ENCODE measurements at regions of chr1 and their contacts with region 1.

Region 1: DNA sequence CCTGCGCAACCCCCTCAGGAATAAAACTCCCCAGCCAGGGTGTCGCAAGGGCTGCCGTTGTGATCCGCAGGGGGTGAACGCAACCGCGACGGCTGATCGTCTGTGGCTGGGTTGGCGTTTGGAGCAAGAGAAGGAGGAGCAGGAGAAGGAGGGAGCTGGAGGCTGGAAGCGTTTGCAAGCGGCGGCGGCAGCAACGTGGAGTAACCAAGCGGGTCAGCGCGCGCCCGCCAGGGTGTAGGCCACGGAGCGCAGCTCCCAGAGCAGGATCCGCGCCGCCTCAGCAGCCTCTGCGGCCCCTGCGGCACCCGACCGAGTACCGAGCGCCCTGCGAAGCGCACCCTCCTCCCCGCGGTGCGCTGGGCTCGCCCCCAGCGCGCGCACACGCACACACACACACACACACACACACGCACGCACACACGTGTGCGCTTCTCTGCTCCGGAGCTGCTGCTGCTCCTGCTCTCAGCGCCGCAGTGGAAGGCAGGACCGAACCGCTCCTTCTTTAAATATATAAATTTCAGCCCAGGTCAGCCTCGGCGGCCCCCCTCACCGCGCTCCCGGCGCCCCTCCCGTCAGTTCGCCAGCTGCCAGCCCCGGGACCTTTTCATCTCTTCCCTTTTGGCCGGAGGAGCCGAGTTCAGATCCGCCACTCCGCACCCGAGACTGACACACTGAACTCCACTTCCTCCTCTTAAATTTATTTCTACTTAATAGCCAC is 696 bp downstream of the TGFB2 start:
- DNase-seq: peak in 1 of 2 experiments; percentile 83
- ATAC-seq: peak; percentile 72 to 78
- H3K4me3 ChIP-seq: peak overlapping the region; percentile 83
- H3K27ac ChIP-seq: peak overlapping the region; percentile 96 to 97
- H3K4me1 ChIP-seq: peaks cover 40% of the 10 kb centered on the region
- CTCF ChIP-seq: no peak
- EP300 ChIP-seq: no peak
- POLR2A ChIP-seq: peak; percentile 63
- RAD21 ChIP-seq: peak in 1 of 2 experiments; percentile 27; a peak in 3 of 5 replicates

Region 2: DNA sequence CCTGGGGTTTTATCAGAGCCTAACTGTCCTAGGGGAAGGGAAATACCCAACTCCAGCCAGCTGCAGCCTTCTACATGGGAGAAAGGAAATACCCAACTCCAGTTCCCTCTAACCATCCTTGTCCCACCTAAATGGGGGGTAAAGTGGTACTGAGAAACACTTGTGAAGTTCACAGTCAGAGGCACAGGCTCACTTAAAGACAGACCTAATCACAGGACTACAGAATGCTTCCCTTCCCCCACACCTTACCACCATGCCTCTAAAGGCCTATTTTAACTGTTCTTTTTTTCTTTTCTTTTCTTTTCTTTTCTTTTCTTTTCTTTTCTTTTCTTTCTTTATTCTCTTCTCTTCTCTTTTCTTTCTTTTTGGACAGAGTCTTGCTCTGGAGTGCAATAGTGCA is 390.1 kb before region 1 on chr1:
- CTCF ChIA-PET with region 1: no interaction called
- POLR2A ChIA-PET with region 1: no interaction called
- DNase-seq: no peak
- ATAC-seq: no peak
- H3K4me3 ChIP-seq: no peak overlapping the region
- H3K27ac ChIP-seq: no peak overlapping the region
- H3K4me1 ChIP-seq: no peaks in the 10 kb centered on the region
- CTCF ChIP-seq: no peak
- EP300 ChIP-seq: no peak
- POLR2A ChIP-seq: no peak
- RAD21 ChIP-seq: no peak

Region 3: GRCh38 chr1:218365226-218365999 is 19.6 kb after region 1 on chr1:
- CTCF ChIA-PET with region 1: interaction called, 5 read pairs
- POLR2A ChIA-PET with region 1: interaction called, 25 read pairs
- DNase-seq: no peak
- ATAC-seq: no peak
- H3K4me3 ChIP-seq: no peak overlapping the region
- H3K27ac ChIP-seq: peak overlapping the region; percentile 83 to 90
- H3K4me1 ChIP-seq: peaks cover 93% of the 10 kb centered on the region
- CTCF ChIP-seq: no peak
- EP300 ChIP-seq: no peak
- POLR2A ChIP-seq: no peak
- RAD21 ChIP-seq: no peak

Region 4: GRCh38 chr1:218377143-218377660 is 31.4 kb after region 1 on chr1:
- CTCF ChIA-PET with region 1: interaction called, 6 read pairs
- POLR2A ChIA-PET with region 1: interaction called, 37 read pairs
- DNase-seq: peak; percentile 76 to 93
- ATAC-seq: peak; percentile 56 to 66
- H3K4me3 ChIP-seq: peak overlapping the region; percentile 7; the same call in 1 of the 3 replicates
- H3K27ac ChIP-seq: peak overlapping the region; percentile 92 to 94
- H3K4me1 ChIP-seq: peaks cover 95% of the 10 kb centered on the region
- CTCF ChIP-seq: no peak
- EP300 ChIP-seq: peak; percentile 87 to 95; a peak in 4 of 5 replicates
- POLR2A ChIP-seq: no peak
- RAD21 ChIP-seq: peak; percentile 24 to 46; a peak in 4 of 5 replicates

Region 5: DNA sequence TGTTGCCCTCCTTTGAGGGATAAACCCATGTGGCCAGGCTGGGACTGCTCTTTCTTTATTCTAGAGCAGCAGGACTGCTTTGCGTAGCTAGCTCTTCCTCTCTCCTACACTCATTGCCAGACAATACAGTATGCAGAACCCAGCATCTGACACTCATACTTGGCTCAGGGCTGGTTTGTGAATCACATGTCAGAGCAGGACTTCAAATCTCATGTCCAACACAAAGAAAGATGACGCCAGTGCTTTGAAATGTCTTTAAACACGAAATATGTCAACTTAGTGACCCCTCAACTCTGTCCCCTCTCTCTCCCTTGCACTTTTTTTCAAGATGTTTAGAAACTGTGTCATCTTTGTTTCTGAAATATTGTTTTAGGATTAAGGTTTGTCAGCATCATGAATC is 134.3 kb after region 1 on chr1:
- CTCF ChIA-PET with region 1: interaction called, 5 read pairs
- POLR2A ChIA-PET with region 1: interaction called, 38 read pairs
- DNase-seq: peak in 1 of 2 experiments; percentile 94
- ATAC-seq: peak; percentile 89 to 91
- H3K4me3 ChIP-seq: no peak overlapping the region
- H3K27ac ChIP-seq: peak overlapping the region; percentile 86 to 91
- H3K4me1 ChIP-seq: peaks cover 62% of the 10 kb centered on the region
- CTCF ChIP-seq: no peak
- EP300 ChIP-seq: no peak
- POLR2A ChIP-seq: no peak
- RAD21 ChIP-seq: peak in 1 of 2 experiments; percentile 36; a peak in 2 of 5 replicates

Region 6: DNA sequence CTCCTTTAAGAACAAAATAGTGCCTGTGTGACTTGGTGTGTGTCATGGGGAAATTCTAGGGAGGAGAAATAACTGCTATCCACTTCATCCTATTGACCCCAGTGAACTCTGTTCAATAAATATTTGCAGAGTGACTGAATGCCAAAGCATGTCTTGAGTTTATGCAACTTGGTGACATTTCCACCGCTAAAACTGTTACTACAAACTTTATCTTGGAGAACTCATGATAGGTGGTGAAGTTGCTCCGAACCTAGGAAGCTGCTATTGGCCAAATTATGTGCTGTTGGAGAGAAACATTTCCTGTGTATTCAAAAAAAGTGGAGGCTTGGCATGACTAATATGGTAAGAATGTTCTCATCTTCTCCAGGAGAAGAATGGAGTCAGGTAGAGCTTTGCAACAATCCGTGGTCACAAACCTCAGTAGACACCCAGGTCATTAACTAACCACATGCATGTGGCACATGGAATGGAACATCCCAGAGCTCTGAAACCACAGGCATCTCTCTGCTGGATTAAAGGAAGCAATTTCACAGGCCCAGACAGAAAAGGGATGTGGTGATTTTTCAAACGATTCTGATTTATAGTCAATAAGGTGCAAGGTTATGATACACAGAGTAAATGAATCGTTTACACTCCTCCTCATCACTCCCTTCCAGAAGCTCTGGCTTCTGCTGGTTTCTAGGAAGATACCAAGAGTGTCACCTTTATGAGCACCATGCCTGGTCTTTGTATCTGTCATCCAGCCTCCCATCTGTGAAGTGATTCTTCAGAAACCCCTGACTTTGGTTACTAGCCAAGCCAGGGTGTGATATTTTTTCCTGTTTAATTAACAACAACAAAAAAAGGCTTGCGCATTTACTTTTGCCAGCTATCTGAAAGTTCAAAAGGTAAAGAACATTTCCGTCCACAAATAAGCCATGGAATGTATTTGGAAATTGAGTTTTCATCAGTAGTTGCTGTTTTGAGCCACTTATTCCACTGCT is 360.4 kb after region 1 on chr1:
- CTCF ChIA-PET with region 1: no interaction called
- POLR2A ChIA-PET with region 1: interaction called, 12 read pairs
- DNase-seq: peak; percentile 85 to 98
- ATAC-seq: peak; percentile 95 to 96
- H3K4me3 ChIP-seq: no peak overlapping the region
- H3K27ac ChIP-seq: peak overlapping the region; percentile 93 to 94
- H3K4me1 ChIP-seq: peaks cover 30% of the 10 kb centered on the region
- CTCF ChIP-seq: no peak
- EP300 ChIP-seq: peak; percentile 99
- POLR2A ChIP-seq: no peak
- RAD21 ChIP-seq: peak; percentile 57 to 92

Measured in A549 (cell line).